ENCODE measurements at regions of chr10 and their contacts with region 1.

Region 1: GRCh38 chr10:122648599-122649428 is 50.8 kb downstream of the C10orf120 start:
- DNase-seq: peak; percentile 51
- H3K4me3 Mint-ChIP-seq: no peak overlapping the region
- H3K27ac Mint-ChIP-seq: no peak overlapping the region
- H3K4me1 Mint-ChIP-seq: no peaks in the 10 kb centered on the region
- H3K27me3 Mint-ChIP-seq: peaks cover 28% of the 10 kb centered on the region

Region 2: DNA sequence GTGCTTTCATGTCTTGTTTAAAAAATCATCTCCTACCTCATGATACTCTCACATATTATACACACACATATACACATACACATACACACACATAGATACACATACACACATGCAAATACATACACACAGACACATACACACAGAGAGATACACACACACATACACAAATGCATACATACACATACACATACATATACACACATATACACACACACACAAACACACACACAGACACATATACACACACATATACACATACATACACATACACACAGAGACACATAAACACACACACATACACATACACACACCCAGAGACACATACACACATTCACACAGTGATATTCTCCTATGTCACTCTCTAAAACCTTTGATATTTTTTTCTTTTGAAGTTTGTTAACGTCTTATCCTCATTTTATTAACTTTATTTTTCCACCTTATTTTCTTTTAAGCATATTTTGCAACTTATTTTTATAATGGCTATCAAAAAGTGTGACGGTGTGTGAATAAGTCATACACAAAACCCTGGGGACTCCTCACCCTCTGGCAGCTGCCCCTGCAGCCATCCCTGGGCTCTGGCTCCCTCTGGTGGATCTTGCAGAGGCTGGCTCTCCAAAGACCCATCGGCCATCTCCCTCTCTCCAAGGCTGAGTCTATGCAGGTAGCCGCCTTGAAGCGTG is 54.8 kb after region 1 on chr10:
- CTCF ChIA-PET with region 1: interaction called, 4 read pairs
- POLR2A ChIA-PET with region 1: no interaction called
- intact Hi-C with region 1: loop called (anchors 1 kb)
- DNase-seq: peak; percentile 66
- H3K4me3 Mint-ChIP-seq: no peak overlapping the region
- H3K27ac Mint-ChIP-seq: no peak overlapping the region
- H3K4me1 Mint-ChIP-seq: peaks cover 8% of the 10 kb centered on the region
- H3K27me3 Mint-ChIP-seq: no peaks in the 10 kb centered on the region